ENCODE measurements at regions of chr17 and their contacts with region 1.

Region 1: DNA sequence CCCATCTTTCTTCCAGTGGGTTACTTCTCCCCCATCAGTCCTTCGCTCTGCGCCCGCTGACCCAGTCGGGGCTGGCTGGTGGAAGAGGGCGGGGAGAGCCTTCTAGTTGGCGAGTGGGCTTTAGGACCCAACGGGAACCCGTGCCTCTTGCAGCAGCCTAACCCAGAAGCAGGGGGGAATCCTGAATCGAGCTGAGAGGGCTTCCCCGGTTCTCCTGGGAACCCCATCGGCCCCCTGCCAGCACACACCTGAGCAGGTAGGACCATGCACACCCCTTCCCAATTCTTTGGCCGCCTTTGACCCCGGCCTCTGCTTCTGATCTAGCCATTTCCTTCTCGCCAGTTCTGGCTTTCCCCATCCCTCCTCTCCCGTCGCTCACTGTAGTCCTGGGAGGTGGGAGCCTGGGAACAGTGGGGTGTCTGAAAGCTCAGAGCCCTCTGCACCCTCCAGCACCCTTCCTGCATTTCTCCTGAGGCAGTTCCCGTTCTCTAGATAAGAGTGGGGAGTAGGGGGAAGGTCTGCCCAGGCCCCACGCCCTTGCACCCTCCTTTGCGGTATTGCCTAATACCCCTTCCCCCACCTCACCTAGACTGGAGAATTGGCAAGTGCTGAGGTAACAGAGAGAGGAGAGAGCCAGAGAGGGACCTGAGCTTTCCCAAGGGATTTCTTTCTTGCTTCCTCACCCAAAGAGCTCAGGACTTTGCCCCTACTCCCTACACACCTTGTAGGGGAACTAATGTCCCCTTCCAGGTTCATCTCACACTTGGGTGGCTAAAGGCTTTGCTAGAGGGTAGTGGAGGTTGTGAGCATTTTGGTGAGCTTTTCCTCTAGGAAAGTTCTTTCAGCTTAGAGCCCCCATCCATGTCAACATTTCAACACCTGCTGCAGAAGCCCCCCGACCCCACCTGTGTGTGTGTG is at the start of gene RARA:
- DNase-seq: peak in 1 of 3 donors; percentile 65
- H3K4me3 ChIP-seq: peak within 1 kb of the TSS; percentile 32 to 79 (median 61)
- H3K27ac ChIP-seq: peak within 1 kb of the TSS in 1 of 2 experiments; percentile 38
- H3K4me1 ChIP-seq: peaks cover 30 to 84% (median 77%) of the 10 kb centered on the region in 4 experiments
- H3K27me3 ChIP-seq: no peaks in the 10 kb centered on the region

Region 2: GRCh38 chr17:40121181-40122135 is 187.8 kb before region 1 on chr17 and contains the start of gene MSL1:
- CTCF ChIA-PET with region 1: no interaction called
- POLR2A ChIA-PET with region 1: no interaction called
- DNase-seq: peak; percentile 72 to 86 (median 83)
- H3K4me3 ChIP-seq: peak within 1 kb of the TSS; percentile 80 to 98 (median 96)
- H3K27ac ChIP-seq: peak within 1 kb of the TSS; percentile 46 to 89
- H3K4me1 ChIP-seq: peaks cover 15 to 49% (median 39%) of the 10 kb centered on the region in 4 experiments
- H3K27me3 ChIP-seq: no peaks in the 10 kb centered on the region

Region 3: GRCh38 chr17:40281663-40282062 is 27.6 kb before region 1 on chr17:
- CTCF ChIA-PET with region 1: no interaction called
- POLR2A ChIA-PET with region 1: no interaction called
- DNase-seq: no peak
- H3K4me3 ChIP-seq: no peak overlapping the region
- H3K27ac ChIP-seq: no peak overlapping the region
- H3K4me1 ChIP-seq: no peaks in the 10 kb centered on the region
- H3K27me3 ChIP-seq: no peaks in the 10 kb centered on the region

Region 4: GRCh38 chr17:40293363-40293762 is 15.9 kb before region 1 on chr17:
- CTCF ChIA-PET with region 1: interaction called, 130 read pairs
- POLR2A ChIA-PET with region 1: no interaction called
- DNase-seq: no peak
- H3K4me3 ChIP-seq: no peak overlapping the region
- H3K27ac ChIP-seq: no peak overlapping the region
- H3K4me1 ChIP-seq: peaks cover 0 to 11% (median 5%) of the 10 kb centered on the region in 4 experiments
- H3K27me3 ChIP-seq: no peaks in the 10 kb centered on the region

Region 5: GRCh38 chr17:40331743-40332641 is 22.7 kb after region 1 on chr17:
- CTCF ChIA-PET with region 1: interaction called, 87 read pairs
- POLR2A ChIA-PET with region 1: interaction called, 3 read pairs
- DNase-seq: peak in 1 of 3 donors; percentile 30
- H3K4me3 ChIP-seq: peak overlapping the region in 3 of 7 experiments; percentile 19 to 39 (median 33)
- H3K27ac ChIP-seq: no peak overlapping the region
- H3K4me1 ChIP-seq: peaks cover 35 to 92% (median 77%) of the 10 kb centered on the region in 4 experiments
- H3K27me3 ChIP-seq: no peaks in the 10 kb centered on the region

Region 6: GRCh38 chr17:40355123-40355803 is 46.0 kb after region 1 on chr17:
- CTCF ChIA-PET with region 1: interaction called, 1,388 read pairs
- POLR2A ChIA-PET with region 1: interaction called, 11 read pairs
- DNase-seq: peak; percentile 65 to 78 (median 68)
- H3K4me3 ChIP-seq: no peak overlapping the region
- H3K27ac ChIP-seq: no peak overlapping the region
- H3K4me1 ChIP-seq: peaks cover 3 to 46% (median 22%) of the 10 kb centered on the region in 4 experiments
- H3K27me3 ChIP-seq: peaks cover 0 to 3% (median 0%) of the 10 kb centered on the region in 5 experiments

Measured in common myeloid progenitor, CD34-positive (primary cell).